WTC11 (cell line): ENCODE measurements at regions of chr11 and their contacts with region 1.

Region 1: DNA sequence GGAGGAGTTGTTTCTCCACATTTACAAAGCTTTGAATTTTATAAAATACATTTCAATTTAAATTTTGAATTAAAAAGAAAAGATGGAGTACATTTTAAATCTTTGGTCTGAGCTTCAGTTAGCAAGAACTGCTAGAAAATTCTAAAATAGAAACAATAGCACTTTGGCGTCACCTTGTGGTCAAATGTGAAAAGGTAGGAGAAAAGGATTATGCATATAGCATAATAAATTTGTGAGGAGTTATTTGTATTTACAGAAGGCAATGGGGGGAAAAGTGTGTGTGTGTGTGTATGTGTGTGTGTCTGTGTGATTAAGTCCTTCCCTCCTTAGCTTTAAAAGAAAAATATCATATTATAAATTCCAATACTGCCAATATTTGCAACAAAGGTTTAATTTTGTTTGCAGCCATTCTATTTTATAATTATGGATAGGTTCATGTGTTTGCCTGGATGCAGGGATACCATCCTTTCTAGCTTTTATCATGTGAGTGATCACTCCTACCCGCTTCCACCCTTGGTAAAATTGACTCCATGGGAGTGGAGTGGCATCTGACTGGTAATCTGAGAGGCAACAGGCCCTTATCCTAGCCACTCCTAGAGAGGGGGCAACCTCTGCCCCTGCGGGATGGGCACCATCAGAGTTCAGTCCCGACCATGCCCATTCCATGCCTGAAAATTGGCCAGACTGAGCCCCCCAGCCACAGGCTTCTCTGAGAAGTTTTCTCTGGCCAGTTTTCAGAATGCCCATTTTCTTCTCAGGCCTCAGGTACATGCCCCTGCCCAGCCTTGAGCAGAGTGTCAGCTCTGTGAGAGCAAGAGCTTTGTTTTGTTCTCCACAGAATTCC is 13.6 kb upstream of the LGR4 start:
- DNase-seq: no peak
- ATAC-seq: peak; percentile 24; the same call in 1 of the 2 replicates
- H3K4me3 Mint-ChIP-seq: no peak overlapping the region
- H3K27ac Mint-ChIP-seq: no peak overlapping the region
- H3K4me1 Mint-ChIP-seq: peaks cover 6% of the 10 kb centered on the region
- H3K27me3 Mint-ChIP-seq: no peaks in the 10 kb centered on the region
- CTCF ChIP-seq: peak; percentile 81

Region 2: DNA sequence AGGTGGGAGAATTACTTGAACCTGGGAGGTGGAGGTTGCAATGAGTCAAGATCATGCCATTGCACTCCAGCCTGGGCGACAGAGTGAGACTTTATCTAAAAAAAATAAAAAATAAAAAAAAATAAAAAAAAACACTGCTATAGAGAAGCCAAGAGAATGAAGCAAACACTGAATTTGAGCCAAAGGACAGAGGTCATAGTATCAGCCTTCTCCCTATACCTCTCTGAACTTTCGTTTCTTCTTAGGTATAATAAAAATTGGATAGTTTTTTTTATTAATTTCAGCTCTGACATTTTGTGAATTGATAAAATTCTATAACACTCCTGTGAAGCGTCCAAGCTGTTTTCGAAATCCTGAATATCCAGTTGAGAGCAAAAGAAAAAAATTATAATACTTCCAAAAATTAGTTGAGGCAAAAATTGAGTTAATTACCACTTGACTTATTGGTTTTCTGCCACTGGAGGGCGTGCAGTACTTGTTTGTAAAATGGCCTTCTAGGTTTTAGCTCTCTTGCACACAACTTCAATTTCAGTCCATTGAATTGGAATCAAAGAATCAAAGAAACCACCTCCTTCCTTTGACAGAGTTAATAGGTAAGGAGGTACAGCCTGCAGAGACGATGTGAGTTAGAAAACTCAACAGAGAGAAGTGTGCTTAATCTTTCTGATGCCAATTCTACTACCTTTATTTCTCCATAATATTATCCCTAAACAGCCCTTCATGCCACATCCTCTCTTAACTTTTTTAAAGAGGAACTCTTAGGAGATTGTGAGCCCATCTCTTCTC is 302.3 kb before region 1 on chr11:
- CTCF ChIA-PET with region 1: interaction called, 54 read pairs
- POLR2A ChIA-PET with region 1: no interaction called
- DNase-seq: peak; percentile 43
- ATAC-seq: peak; percentile 57
- H3K4me3 Mint-ChIP-seq: no peak overlapping the region
- H3K27ac Mint-ChIP-seq: no peak overlapping the region
- H3K4me1 Mint-ChIP-seq: peaks cover 14% of the 10 kb centered on the region
- H3K27me3 Mint-ChIP-seq: no peaks in the 10 kb centered on the region
- CTCF ChIP-seq: peak; percentile 65

Region 3: DNA sequence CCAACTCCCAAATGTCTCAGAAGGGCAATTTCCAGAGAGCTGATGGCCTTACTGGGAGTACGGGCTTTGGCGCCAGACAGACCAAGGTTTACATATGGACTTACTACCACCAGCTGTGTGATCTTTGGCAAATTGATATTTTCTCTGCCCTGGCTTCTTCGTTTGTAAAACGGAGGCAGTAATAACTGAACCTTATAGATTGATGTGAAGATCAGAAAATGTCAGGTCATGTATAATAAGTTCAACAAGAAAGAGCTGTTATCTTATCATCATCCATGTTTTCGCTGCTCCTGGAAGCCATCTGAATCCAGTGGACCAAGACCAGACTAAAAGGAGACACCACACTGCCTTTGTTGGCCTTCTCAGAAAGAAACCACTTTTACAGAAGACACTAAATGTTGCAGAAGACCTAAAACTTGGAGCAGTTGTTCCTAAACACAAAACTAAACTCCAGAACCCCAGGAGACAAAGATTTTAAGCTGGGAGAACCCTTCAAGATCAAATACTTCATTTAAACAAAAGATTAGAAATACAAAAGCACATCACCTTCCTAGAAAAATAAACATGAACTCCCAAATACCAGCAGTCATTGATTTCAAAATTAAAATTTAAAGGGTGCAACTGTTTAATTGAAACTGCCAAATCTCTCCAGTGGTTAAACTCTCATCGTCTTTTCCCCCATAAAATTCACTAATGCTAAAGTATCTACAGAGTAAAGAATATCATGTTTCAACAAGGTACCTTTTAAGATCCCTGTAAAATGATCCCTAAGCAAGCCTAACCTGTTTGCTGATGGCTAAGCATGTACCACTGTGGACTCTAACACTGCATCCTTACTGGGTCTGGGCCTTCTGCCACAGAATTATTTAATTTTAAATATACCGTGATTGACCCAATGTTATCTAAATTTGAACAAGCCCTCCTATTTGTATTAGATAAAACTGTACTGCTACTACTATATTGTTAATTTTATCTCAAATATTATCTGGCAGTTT is 69.7 kb before region 1 on chr11:
- CTCF ChIA-PET with region 1: interaction called, 11 read pairs
- POLR2A ChIA-PET with region 1: no interaction called
- DNase-seq: no peak
- ATAC-seq: peak; percentile 60; the same call in 1 of the 2 replicates
- H3K4me3 Mint-ChIP-seq: no peak overlapping the region
- H3K27ac Mint-ChIP-seq: peak overlapping the region; percentile 83; the same call in 1 of the 2 replicates
- H3K4me1 Mint-ChIP-seq: peaks cover 57% of the 10 kb centered on the region
- H3K27me3 Mint-ChIP-seq: no peaks in the 10 kb centered on the region
- CTCF ChIP-seq: no peak

Region 4: DNA sequence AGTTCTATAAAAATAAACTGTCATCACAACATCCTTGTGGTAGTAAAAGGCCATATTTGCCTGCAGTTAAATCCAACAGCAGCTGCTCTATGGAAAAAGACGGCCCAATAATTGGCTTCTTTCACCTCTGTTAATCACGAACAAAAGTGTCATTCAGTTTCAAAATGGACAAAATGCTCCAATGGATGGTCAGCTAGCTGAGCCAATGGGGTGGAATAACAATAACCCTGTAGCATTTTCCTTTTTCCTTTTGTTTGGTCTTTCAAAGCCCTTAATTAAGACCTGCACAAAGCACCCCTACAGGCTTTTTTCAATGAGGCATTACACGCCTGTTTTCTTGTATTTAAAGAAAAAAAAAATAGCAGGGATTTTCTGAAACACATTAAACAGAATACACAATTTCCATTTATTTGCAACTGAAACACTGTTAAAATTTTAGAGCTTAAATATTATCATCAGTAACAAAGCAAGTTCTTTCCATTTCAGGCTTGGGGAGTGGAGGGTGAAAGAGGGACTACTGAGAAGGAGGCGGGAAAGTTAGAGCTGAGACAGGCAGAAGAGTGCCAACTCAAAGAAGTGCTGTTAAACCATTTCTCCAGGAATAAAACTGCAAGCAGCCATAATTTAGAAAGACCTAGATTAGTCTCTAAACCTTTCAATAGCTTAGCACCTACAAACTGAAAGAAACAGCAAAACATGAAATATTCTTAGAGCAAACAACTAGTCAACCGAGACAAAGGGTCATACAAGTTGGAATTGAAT is 42.2 kb before region 1 on chr11:
- CTCF ChIA-PET with region 1: interaction called, 14 read pairs
- POLR2A ChIA-PET with region 1: no interaction called
- DNase-seq: no peak
- ATAC-seq: peak; percentile 15
- H3K4me3 Mint-ChIP-seq: peak overlapping the region; percentile 64
- H3K27ac Mint-ChIP-seq: peak overlapping the region; percentile 82
- H3K4me1 Mint-ChIP-seq: peaks cover 76% of the 10 kb centered on the region
- H3K27me3 Mint-ChIP-seq: no peaks in the 10 kb centered on the region
- CTCF ChIP-seq: no peak

Region 5: DNA sequence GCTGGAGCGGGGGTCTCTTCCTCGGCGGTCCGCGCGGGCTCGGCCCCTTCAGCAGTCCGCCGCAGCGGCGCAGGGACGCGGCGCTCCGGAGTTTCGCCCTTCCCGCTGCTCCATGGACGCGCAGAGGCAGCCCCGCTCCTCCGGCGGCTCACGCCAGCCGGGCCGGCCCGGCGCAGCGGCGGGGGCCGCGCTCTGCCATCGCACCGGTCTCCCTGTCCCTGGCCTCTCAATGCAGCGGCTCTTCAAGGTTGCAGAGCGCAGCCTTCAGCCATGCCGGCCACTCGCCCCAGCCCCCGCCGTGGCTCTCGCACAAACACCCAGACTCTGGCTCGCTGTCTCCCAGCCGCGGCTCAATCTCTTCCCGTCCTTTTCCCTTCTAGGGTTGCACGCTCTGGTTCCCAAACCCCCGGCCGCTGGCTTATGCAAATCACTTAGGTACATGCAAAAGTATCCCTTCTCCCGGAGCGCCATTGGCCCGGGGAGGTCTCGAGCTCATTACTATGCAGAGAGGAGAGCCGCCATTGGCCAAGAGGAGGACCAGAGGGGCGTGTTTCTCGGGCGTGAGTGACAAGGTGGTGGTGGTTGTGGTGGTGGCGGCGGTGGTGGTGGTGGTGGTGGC is 13.6 kb before region 1 on chr11 and contains the start of gene LGR4:
- CTCF ChIA-PET with region 1: interaction called, 22 read pairs
- POLR2A ChIA-PET with region 1: interaction called, 5 read pairs
- DNase-seq: peak; percentile 98
- ATAC-seq: peak; percentile 97
- H3K4me3 Mint-ChIP-seq: peak within 1 kb of the TSS; percentile 98
- H3K27ac Mint-ChIP-seq: peak within 1 kb of the TSS; percentile 99
- H3K4me1 Mint-ChIP-seq: peaks cover 42% of the 10 kb centered on the region
- H3K27me3 Mint-ChIP-seq: no peaks in the 10 kb centered on the region
- CTCF ChIP-seq: no peak
- total RNA-seq, gene LGR4: 47.8 to 53.8 TPM (median 51.1 TPM) in 3 replicates